H1 (cell line): ENCODE measurements at regions of chr9 and their contacts with region 1.

Region 1: GRCh38 chr9:84736081-84736480 is 66.6 kb downstream of the NTRK2 start:
- DNase-seq: no peak
- H3K4me3 ChIP-seq: no peak overlapping the region
- H3K27ac ChIP-seq: no peak overlapping the region
- H3K4me1 ChIP-seq: peaks cover 0 to 5% (median 0%) of the 10 kb centered on the region in 4 experiments; a peak in 2 of 7 replicates
- H3K27me3 ChIP-seq: no peaks in the 10 kb centered on the region
- CTCF ChIP-seq: no peak
- EP300 ChIP-seq: no peak
- POLR2A ChIP-seq: no peak
- RAD21 ChIP-seq: no peak

Region 2: GRCh38 chr9:84659313-84659712 is 76.8 kb before region 1 on chr9:
- CTCF ChIA-PET with region 1: no interaction called
- POLR2A ChIA-PET with region 1: no interaction called
- DNase-seq: no peak
- H3K4me3 ChIP-seq: no peak overlapping the region
- H3K27ac ChIP-seq: no peak overlapping the region
- H3K4me1 ChIP-seq: no peaks in the 10 kb centered on the region
- H3K27me3 ChIP-seq: no peaks in the 10 kb centered on the region
- CTCF ChIP-seq: no peak
- EP300 ChIP-seq: no peak
- POLR2A ChIP-seq: no peak
- RAD21 ChIP-seq: no peak

Region 3: DNA sequence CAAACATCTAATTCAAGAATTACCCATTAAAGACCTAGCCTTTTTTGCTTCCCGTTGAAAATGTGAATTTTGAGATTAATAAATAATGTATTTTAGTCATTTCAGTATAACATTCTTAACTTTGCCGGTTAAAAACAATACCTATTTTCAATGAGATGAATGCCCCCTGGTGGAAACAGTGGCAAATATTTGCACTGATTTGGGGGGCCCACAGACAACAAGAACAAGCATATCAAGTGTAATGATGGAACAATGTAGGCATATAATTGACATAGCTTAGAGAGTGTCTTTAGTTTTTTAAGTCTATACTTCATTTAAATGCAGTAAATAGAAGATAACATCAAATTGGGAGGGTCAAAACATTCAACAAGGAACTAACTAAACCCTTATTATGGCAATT is 45.4 kb after region 1 on chr9:
- CTCF ChIA-PET with region 1: interaction called, 11 read pairs
- POLR2A ChIA-PET with region 1: no interaction called
- DNase-seq: no peak
- H3K4me3 ChIP-seq: no peak overlapping the region
- H3K27ac ChIP-seq: no peak overlapping the region
- H3K4me1 ChIP-seq: no peaks in the 10 kb centered on the region
- H3K27me3 ChIP-seq: no peaks in the 10 kb centered on the region
- CTCF ChIP-seq: peak in 2 of 3 experiments; percentile 49 to 51; a peak in 2 of 4 replicates
- EP300 ChIP-seq: no peak
- POLR2A ChIP-seq: no peak
- RAD21 ChIP-seq: peak; percentile 64 to 69